Activated B cell treated with CpG ODN at 0.5 μM for 24 hours (primary cell): ENCODE measurements at regions of chrX and their contacts with region 1.

Region 1: GRCh38 chrX:149938427-149939270 is at the start of gene EOLA2:
- DNase-seq: peak; percentile 79
- ATAC-seq: peak; percentile 53
- H3K4me3 Mint-ChIP-seq: peak within 1 kb of the TSS; percentile 85
- H3K27ac Mint-ChIP-seq: peak within 1 kb of the TSS; percentile 93
- H3K4me1 Mint-ChIP-seq: peaks cover 10% of the 10 kb centered on the region
- H3K27me3 Mint-ChIP-seq: no peaks in the 10 kb centered on the region
- CTCF ChIP-seq: no peak
- total RNA-seq, gene EOLA2: 37.5 and 38.4 TPM in 2 replicates

Region 2: GRCh38 chrX:149539283-149540130 is 399.1 kb before region 1 on chrX:
- CTCF ChIA-PET with region 1: interaction called, 4 read pairs
- POLR2A ChIA-PET with region 1: interaction called, 68 read pairs
- intact Hi-C with region 1: no loop called
- DNase-seq: peak; percentile 75
- ATAC-seq: peak; percentile 51
- H3K4me3 Mint-ChIP-seq: peak overlapping the region; percentile 85
- H3K27ac Mint-ChIP-seq: peak overlapping the region; percentile 85
- H3K4me1 Mint-ChIP-seq: peaks cover 15% of the 10 kb centered on the region
- H3K27me3 Mint-ChIP-seq: no peaks in the 10 kb centered on the region
- CTCF ChIP-seq: no peak

Region 3: GRCh38 chrX:150478496-150479492 is 540.1 kb after region 1 on chrX:
- CTCF ChIA-PET with region 1: no interaction called
- POLR2A ChIA-PET with region 1: no interaction called
- intact Hi-C with region 1: loop called (anchors 2 kb)
- DNase-seq: no peak
- ATAC-seq: peak; percentile 28
- H3K4me3 Mint-ChIP-seq: peak overlapping the region; percentile 71
- H3K27ac Mint-ChIP-seq: peak overlapping the region; percentile 68
- H3K4me1 Mint-ChIP-seq: peaks cover 42% of the 10 kb centered on the region
- H3K27me3 Mint-ChIP-seq: no peaks in the 10 kb centered on the region
- CTCF ChIP-seq: no peak

Region 4: DNA sequence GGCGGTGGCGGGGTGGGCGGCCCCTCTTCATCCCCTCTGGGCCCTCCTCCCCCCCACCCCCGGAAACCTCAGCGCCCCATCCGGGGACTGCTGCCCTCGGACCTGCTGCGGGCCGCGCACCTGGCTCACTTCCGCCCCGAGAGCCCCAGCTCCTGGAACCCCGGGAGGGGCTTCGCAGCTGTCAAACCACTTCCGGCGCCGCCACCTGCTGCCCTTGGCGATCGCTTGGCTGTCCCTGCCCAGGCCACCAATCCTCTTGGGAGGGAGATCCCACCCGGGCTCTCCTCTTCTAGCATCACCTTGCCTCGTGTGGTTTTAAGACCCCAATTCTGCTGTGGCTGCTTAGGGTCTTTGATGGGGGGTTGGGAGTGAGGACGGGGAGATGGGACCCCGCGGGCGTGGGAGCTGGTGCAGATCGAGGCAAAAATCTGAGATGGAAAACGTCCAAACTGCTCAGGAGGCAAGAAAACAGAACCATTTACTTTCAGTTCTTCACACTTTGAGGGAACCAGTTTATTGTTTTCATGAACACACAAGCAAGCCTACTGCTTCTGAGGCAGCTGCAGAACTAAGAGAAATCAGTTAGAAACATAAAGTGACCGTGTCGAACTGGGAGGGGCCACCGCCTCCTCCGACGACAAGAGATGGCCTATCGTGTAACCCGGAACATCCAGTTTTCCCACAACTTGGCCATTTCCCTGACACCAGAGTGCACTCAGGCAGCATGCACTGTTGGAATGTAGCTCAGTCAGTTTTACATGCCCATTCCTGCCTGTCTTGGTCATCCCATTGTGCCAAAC is 755.3 kb after region 1 on chrX:
- CTCF ChIA-PET with region 1: no interaction called
- POLR2A ChIA-PET with region 1: interaction called, 18 read pairs
- intact Hi-C with region 1: loop called (anchors 2 kb)
- DNase-seq: peak; percentile 65
- ATAC-seq: peak; percentile 56
- H3K4me3 Mint-ChIP-seq: peak overlapping the region; percentile 88
- H3K27ac Mint-ChIP-seq: peak overlapping the region; percentile 98
- H3K4me1 Mint-ChIP-seq: peaks cover 61% of the 10 kb centered on the region
- H3K27me3 Mint-ChIP-seq: no peaks in the 10 kb centered on the region
- CTCF ChIP-seq: no peak

Region 5: GRCh38 chrX:150731795-150732194 is 793.1 kb after region 1 on chrX:
- CTCF ChIA-PET with region 1: no interaction called
- POLR2A ChIA-PET with region 1: no interaction called
- intact Hi-C with region 1: no loop called
- DNase-seq: no peak
- ATAC-seq: no peak
- H3K4me3 Mint-ChIP-seq: no peak overlapping the region
- H3K27ac Mint-ChIP-seq: no peak overlapping the region
- H3K4me1 Mint-ChIP-seq: peaks cover 18% of the 10 kb centered on the region
- H3K27me3 Mint-ChIP-seq: no peaks in the 10 kb centered on the region
- CTCF ChIP-seq: no peak

Region 6: DNA sequence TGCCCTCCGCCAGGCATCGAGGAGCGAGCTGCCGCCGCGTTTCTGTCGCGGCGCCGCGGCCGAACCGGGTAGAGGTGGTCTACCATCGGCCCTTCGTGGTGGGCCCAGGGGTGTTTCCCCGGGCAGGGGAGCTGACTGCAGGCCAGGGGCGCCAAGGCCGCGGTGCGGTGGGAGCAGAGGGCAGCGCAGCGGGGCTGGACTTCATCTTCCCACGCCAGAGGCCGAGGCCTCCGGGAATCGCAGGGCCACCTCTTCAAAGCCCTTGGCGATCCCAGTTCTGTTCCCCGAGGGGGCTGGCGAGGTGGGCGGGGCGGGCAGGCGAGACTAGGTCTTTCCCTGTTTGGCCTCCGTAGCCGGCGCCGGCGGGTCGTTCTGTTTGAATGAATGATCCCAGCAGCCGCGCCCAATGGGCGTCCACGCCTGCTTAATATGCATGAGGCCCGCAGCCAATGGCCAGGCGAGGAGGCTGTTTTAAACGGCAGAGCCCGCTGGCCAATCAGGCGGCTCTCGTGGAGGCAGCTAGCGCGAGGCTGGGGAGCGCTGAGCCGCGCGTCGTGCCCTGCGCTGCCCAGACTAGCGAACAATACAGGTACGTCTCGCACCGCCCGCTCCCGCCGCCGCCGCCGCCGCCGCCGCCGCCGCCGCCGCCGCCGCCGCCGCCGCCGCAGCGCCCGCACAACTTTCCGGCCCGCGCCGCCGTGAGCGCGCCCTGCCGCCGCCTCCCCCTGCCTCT is 1044.3 kb after region 1 on chrX and contains the start of gene HMGB3:
- CTCF ChIA-PET with region 1: no interaction called
- POLR2A ChIA-PET with region 1: no interaction called
- intact Hi-C with region 1: loop called (anchors 10 kb)
- DNase-seq: peak; percentile 59
- ATAC-seq: peak; percentile 97
- H3K4me3 Mint-ChIP-seq: peak within 1 kb of the TSS; percentile 64
- H3K27ac Mint-ChIP-seq: no peak within 1 kb of the TSS
- H3K4me1 Mint-ChIP-seq: peaks cover 12% of the 10 kb centered on the region
- H3K27me3 Mint-ChIP-seq: peaks cover 11% of the 10 kb centered on the region
- CTCF ChIP-seq: no peak
- total RNA-seq, gene HMGB3: 1.7 and 2.5 TPM in 2 replicates